Ovary (tissue), 10 donors: ENCODE measurements at regions of chr17 and their contacts with region 1.

Region 1: DNA sequence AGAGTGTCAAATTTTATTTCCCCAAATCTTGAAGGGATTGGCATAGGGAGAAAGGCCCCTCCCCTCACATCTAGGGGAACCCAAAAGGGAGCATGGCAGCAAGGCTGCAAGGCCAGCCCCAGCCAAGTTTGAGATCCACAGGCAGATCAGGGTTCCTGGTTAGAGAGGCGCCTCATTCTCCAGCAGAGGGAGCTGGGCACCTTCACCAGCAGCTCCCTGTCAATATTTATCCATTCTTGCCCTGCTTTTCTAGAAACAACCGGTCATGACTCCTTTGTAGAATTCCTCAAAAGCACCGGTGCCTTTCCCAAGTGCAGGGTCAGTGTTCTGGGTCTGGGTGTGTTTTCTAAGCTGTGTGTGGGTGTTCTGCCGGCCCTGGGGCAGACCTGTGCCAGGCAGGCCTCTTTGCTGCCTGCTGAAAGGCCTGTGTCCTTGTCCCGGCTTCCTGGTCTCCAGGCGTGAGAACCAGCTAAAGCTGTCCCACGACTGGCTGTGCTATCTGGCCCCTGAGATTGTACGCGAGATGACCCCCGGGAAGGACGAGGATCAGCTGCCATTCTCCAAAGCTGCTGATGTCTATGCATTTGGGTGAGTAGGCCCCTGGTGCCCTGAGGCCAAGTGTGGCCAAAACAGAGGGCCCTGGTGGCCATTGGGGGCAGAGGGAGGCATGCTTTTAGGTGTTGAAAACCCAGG is 21.2 kb upstream of the LGALS9 start:
- DNase-seq: peak in 2 of 5 donors; percentile 39 to 44
- H3K4me3 ChIP-seq: no peak overlapping the region
- H3K27ac ChIP-seq: no peak overlapping the region
- H3K4me1 ChIP-seq: peaks cover 1% of the 10 kb centered on the region
- H3K27me3 ChIP-seq: no peaks in the 10 kb centered on the region
- CTCF ChIP-seq: peak; percentile 21 to 40 (median 31)
- EP300 ChIP-seq: no peak
- POLR2A ChIP-seq: no peak

Region 2: GRCh38 chr17:27438348-27438998 is 171.3 kb before region 1 on chr17:
- intact Hi-C with region 1: loop called in 1 of 4 experiments (anchors 5 kb)
- DNase-seq: no peak
- H3K4me3 ChIP-seq: no peak overlapping the region
- H3K27ac ChIP-seq: no peak overlapping the region
- H3K4me1 ChIP-seq: no peaks in the 10 kb centered on the region
- H3K27me3 ChIP-seq: no peaks in the 10 kb centered on the region
- CTCF ChIP-seq: no peak
- EP300 ChIP-seq: no peak
- POLR2A ChIP-seq: no peak

Region 3: GRCh38 chr17:27559506-27560481 is 50.0 kb before region 1 on chr17:
- intact Hi-C with region 1: no loop called
- DNase-seq: peak; percentile 72 to 78 (median 74)
- H3K4me3 ChIP-seq: peak overlapping the region; percentile 4
- H3K27ac ChIP-seq: peak overlapping the region in 1 of 2 donors; percentile 56
- H3K4me1 ChIP-seq: peaks cover 7% of the 10 kb centered on the region
- H3K27me3 ChIP-seq: no peaks in the 10 kb centered on the region
- CTCF ChIP-seq: peak in 1 of 3 donors; percentile 45
- EP300 ChIP-seq: no peak
- POLR2A ChIP-seq: no peak

Region 4: DNA sequence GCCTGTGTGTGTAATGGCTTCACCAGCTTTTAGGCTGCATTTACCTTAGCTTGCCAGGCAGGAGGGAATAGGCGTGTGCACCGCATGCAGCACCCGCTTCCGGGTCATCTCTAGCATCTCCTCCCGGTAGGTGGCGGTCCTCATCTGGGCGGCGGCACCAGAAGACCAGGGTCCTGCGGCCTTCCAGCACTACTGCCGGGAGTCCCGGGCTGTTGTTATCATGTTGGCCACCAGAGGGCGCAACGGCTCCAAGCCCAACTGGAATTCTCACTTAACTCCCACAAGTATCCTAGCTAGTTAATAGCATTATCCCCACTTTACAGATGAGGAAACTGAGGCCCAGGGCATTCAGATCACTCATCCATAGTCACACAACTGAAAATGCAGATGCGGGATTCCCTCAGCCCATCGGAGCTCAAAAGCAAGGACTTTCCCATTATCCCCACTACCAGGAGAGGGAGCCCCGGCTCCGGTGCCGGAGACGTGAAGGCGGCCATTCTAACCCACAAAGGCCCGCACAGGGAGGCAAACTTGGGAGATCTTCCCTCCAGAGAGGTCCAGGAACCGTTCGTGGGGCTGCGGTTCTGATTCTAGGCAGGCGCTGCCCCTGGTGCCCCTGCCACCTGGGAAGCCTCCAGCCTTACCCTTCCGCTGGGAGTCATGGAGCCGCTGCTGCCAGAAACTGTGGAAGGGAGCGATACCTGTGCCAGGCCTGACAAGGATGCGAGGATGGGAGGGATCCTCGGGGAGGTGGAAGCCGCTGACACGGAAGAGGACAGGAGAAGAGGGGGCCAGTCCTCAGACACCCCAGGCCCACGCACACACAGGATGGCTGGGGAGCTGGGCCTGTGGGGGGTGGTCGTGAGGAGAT is 45.1 kb after region 1 on chr17:
- intact Hi-C with region 1: loop called in 3 of 4 experiments (anchors 5 kb)
- DNase-seq: peak; percentile 42 to 79 (median 69)
- H3K4me3 ChIP-seq: no peak overlapping the region
- H3K27ac ChIP-seq: no peak overlapping the region
- H3K4me1 ChIP-seq: no peaks in the 10 kb centered on the region
- H3K27me3 ChIP-seq: no peaks in the 10 kb centered on the region
- CTCF ChIP-seq: peak; percentile 61 to 71 (median 63)
- EP300 ChIP-seq: no peak
- POLR2A ChIP-seq: no peak